Right ventricle myocardium superior (tissue), 1 donor: ENCODE measurements at regions of chr9 and their contacts with region 1.

Region 1: DNA sequence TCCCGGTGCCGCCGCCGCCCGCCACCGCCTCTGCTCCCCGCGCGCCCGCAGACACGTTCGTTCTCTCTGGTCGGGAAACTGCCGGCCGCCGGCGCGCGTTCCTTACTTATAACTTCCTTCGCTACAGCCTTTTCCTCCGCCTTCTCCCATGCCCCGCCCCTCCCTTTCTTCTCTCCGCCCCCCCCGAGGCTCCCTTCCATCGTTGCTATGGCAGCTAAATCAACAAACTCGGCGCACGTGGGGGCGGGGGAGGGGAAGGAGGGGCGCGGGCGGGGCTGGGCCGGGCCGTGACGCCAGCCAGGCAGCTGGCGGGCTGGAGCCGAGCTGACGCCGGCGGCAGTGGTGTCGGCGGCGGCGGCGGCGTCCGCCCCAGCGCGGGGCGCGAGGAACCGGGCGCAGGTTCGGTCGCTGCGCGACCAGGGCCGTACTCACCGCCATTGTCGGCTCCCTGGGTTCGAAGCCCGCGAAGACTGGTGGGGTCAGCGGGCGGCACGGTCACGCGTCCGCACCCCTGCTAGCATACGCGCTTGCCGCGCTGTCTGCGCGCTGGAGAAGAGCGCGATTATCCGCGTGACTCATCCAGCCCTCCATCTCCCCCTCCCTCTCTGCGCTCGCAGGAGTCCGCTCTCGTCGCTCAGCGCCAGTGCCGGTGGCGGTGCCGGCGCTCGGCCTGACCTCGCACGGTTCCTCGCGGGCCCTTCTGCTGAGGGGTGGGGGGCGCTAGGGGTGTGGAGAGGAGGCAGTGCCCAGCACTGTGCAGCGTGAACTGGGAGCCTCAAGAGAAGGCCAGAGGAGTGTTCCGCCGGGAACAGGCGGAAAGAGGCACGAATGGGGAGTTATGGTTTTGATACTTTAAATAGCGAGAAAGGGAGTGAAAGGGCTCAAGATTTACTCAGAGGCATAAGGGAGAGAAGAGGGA is at the start of gene KLF4:
- DNase-seq: peak; percentile 95
- ATAC-seq: peak; percentile 91
- total RNA-seq, gene KLF4: 32.4 TPM

Region 2: DNA sequence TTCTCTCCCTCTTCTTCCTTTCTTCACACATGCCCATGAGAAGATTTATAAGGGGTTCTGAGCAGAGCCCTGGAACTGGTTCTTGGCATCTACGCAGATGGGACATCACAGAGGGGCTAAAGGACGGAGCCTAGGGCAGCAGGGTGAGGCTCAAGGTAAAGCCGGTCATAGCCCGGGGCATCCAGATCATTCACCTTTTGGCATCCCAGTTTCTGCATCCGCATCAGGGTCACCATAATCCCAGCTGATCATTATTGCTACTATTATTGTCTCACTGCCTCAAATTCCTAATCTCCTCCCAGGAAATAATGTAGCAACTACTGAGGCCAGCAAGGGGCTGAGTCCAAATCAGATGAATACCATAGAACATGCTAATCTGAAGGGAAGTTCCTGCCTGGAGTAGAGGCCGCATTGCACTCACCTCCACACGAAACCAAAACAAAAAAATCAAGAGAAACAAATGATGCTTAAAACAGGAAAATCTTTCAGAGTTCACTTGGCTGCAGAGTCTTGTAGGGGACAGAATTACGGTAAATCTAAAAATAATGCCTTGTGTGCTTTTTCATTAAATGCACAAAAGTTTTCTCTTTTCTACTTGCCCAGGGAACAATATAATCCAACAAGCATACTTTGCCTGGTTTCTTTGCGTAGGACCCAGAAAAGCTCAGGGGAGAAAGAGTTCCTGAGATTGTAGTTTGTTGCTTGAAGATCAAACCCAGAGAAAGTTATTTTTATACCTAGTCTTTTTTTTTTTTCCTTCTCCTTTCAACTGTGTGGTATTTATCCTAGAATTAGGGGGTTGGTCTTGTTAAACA is 87.2 kb after region 1 on chr9:
- intact Hi-C with region 1: loop called (anchors 10 kb)
- DNase-seq: no peak
- ATAC-seq: no peak

Region 3: DNA sequence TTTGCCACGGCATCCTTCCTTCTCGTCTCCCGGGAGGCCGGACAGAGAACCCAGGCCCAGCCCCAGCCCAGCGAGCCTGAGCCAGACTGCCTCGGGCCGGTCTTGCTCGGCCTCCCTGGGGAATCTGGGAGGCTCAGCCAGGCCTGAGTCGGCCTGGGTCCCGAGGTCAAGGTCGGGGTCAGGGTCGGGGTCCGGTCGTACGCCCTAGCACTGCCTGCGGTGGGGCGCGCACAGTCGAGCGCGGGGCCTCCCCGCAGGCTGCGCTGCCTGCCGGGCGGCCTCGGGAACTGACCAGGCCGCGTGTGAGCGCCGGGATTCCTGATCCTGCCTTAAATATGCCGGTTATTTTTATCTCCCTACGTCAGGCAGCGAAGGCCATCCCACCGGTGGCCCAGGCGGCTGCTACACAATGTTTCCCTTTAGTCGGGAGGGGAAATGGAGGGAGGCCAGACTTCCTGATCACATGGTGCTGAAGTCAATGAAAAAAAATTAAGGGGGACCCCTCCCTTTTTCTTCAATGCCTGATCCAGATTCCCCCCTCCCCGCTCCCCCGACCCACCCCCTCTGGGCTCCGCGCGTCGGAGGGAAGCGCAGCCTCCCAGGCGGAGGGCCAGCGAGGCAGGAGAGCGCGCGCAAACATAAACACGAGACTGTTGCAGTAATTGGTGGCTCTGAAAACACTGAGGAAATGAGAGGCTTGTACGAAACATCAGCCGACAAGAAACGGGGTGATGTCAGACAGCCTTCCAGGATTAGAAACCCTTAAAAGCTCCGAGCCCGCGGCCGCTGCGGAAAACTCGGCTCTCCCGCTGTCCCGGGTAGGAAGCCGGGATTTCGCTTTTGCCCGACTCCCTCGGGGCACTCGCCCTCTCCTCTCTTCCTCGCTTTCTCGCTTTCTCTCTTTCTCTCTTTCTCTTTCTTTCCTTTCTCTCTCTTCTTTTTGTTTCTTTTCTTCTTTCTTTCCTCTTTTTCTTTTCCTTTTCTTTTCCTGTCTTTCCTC is 147.8 kb after region 1 on chr9:
- intact Hi-C with region 1: loop called (anchors 5 kb)
- DNase-seq: peak; percentile 92
- ATAC-seq: peak; percentile 95